ENCODE measurements at regions of chr15 and their contacts with region 1.

Region 1: GRCh38 chr15:73950831-73951561 is 24.7 kb downstream of the LOXL1 start:
- DNase-seq: peak; percentile 53 to 87 (median 78)
- ATAC-seq: peak; percentile 98
- H3K4me3 ChIP-seq: no peak overlapping the region
- H3K4me3 Mint-ChIP-seq: no peak overlapping the region
- H3K27ac ChIP-seq: no peak overlapping the region
- H3K27ac Mint-ChIP-seq: peak overlapping the region; percentile 89
- H3K4me1 ChIP-seq: peaks cover 3% of the 10 kb centered on the region
- H3K4me1 Mint-ChIP-seq: peaks cover 4% of the 10 kb centered on the region
- H3K27me3 ChIP-seq: no peaks in the 10 kb centered on the region
- H3K27me3 Mint-ChIP-seq: no peaks in the 10 kb centered on the region
- CTCF ChIP-seq: peak; percentile 89

Region 2: DNA sequence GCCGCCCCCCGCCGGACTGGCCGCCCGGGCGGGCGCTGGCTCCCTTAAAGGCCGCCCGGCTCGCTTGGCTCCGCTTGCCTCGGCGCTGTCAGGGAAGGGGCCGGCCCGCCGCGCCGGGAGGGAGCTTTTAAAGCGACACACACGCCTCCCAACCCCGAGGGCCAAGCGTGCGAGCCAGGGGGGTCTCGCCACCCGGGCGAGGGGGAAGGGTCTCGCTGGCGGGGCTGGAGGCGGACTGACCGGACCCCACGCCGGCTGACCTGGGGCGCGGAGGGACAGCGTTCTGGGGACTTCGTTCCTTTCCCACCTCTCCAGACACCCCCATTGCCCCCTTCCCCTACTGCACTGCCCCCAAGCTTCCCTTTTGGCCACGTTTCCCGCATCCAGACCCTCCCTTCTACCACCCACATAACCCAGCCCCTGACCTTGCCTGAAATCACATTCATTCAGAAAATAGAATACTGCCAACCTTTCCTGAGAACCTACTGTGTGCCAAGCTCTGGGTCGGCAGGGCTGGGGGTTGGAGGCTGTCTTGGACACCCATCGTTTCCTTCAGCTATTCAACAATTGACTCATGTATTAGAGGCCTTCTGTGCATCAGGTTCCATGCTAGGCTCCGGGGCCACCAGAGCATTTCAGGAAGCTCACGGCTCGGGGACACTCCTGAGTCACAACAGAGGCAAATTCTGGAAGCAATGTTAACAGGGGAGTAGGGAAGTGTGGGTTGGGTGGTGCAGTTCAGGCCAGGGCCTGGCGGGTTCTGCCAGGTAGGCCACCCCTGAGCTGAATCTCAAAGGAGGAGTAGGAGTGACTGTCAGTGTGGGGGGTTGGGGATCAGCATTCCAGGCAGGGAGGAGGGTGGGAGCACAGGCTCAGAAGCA is 197.5 kb before region 1 on chr15 and contains the start of gene INSYN1:
- CTCF ChIA-PET with region 1: no interaction called
- POLR2A ChIA-PET with region 1: no interaction called
- intact Hi-C with region 1: no loop called
- DNase-seq: no peak
- ATAC-seq: no peak
- H3K4me3 ChIP-seq: no peak within 1 kb of the TSS
- H3K4me3 Mint-ChIP-seq: no peak within 1 kb of the TSS
- H3K27ac ChIP-seq: no peak within 1 kb of the TSS
- H3K27ac Mint-ChIP-seq: no peak within 1 kb of the TSS
- H3K4me1 ChIP-seq: no peaks in the 10 kb centered on the region
- H3K4me1 Mint-ChIP-seq: no peaks in the 10 kb centered on the region
- H3K27me3 ChIP-seq: peaks cover 5 to 6% of the 10 kb centered on the region in 2 experiments
- H3K27me3 Mint-ChIP-seq: peaks cover 58% of the 10 kb centered on the region
- CTCF ChIP-seq: no peak
- total RNA-seq, gene INSYN1: not detected

Region 3: GRCh38 chr15:73927476-73928240 is 23.3 kb before region 1 on chr15:
- CTCF ChIA-PET with region 1: interaction called, 11 read pairs
- POLR2A ChIA-PET with region 1: no interaction called
- intact Hi-C with region 1: no loop called
- DNase-seq: peak; percentile 56 to 87 (median 77)
- ATAC-seq: peak; percentile 88
- H3K4me3 ChIP-seq: peak overlapping the region; percentile 49 to 79
- H3K4me3 Mint-ChIP-seq: peak overlapping the region; percentile 79
- H3K27ac ChIP-seq: peak overlapping the region in 1 of 2 experiments; percentile 41
- H3K27ac Mint-ChIP-seq: peak overlapping the region; percentile 20
- H3K4me1 ChIP-seq: peaks cover 27% of the 10 kb centered on the region
- H3K4me1 Mint-ChIP-seq: peaks cover 38% of the 10 kb centered on the region
- H3K27me3 ChIP-seq: no peaks in the 10 kb centered on the region
- H3K27me3 Mint-ChIP-seq: no peaks in the 10 kb centered on the region
- CTCF ChIP-seq: peak; percentile 83

Region 4: GRCh38 chr15:73964736-73965093 is 13.7 kb after region 1 on chr15:
- CTCF ChIA-PET with region 1: interaction called, 328 read pairs
- POLR2A ChIA-PET with region 1: interaction called, 6 read pairs
- intact Hi-C with region 1: loop called (anchors 1 kb)
- DNase-seq: peak; percentile 74 to 94 (median 88)
- ATAC-seq: peak; percentile 89
- H3K4me3 ChIP-seq: peak overlapping the region; percentile 46 to 51
- H3K4me3 Mint-ChIP-seq: peak overlapping the region; percentile 83
- H3K27ac ChIP-seq: no peak overlapping the region
- H3K27ac Mint-ChIP-seq: peak overlapping the region; percentile 39
- H3K4me1 ChIP-seq: peaks cover 26% of the 10 kb centered on the region
- H3K4me1 Mint-ChIP-seq: peaks cover 34% of the 10 kb centered on the region
- H3K27me3 ChIP-seq: no peaks in the 10 kb centered on the region
- H3K27me3 Mint-ChIP-seq: no peaks in the 10 kb centered on the region
- CTCF ChIP-seq: peak; percentile 95

Region 5: GRCh38 chr15:74044267-74045110 is 93.5 kb after region 1 on chr15:
- CTCF ChIA-PET with region 1: interaction called, 14 read pairs
- POLR2A ChIA-PET with region 1: no interaction called
- intact Hi-C with region 1: no loop called
- DNase-seq: no peak
- ATAC-seq: no peak
- H3K4me3 ChIP-seq: no peak overlapping the region
- H3K4me3 Mint-ChIP-seq: no peak overlapping the region
- H3K27ac ChIP-seq: no peak overlapping the region
- H3K27ac Mint-ChIP-seq: no peak overlapping the region
- H3K4me1 ChIP-seq: peaks cover 10% of the 10 kb centered on the region
- H3K4me1 Mint-ChIP-seq: peaks cover 10% of the 10 kb centered on the region
- H3K27me3 ChIP-seq: no peaks in the 10 kb centered on the region
- H3K27me3 Mint-ChIP-seq: no peaks in the 10 kb centered on the region
- CTCF ChIP-seq: no peak

Region 6: DNA sequence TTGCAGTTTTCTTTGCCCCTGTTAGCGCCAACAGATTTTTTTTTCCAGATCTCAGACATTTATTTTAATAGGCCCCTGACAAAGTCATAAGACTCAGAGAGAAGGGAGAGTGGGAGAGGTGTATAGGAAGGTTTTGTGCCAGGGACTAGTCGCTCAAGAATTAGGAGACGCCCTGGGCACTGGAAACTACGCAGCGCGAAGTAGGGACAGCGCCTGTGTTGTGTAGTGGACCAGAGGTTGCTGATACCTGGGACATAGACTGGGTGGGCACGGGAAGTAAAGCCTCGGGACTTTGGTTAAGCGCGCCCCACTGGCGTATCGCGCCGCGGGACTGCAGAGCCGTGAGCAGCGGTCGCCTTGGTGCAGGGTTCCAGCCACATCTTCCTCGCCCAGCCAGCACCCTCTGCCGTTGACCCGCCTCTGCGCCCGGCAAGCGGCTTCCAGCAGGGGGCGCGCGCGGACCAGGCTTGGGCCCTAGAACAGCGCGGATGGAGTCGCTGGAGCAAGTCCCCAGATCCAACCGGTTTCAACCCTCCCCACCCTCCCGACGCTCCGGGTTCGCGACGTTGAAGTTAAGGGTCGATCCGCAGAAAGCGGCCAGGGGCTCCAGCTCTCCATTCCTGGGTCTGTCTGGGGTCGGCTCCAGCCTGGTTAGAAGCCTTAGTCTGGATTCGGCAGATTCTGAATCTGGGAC is 176.4 kb after region 1 on chr15:
- CTCF ChIA-PET with region 1: no interaction called
- POLR2A ChIA-PET with region 1: no interaction called
- intact Hi-C with region 1: loop called in 1 of 2 experiments (anchors 5 kb)
- DNase-seq: peak; percentile 72 to 94 (median 82)
- ATAC-seq: peak; percentile 90
- H3K4me3 ChIP-seq: no peak overlapping the region
- H3K4me3 Mint-ChIP-seq: no peak overlapping the region
- H3K27ac ChIP-seq: no peak overlapping the region
- H3K27ac Mint-ChIP-seq: no peak overlapping the region
- H3K4me1 ChIP-seq: peaks cover 25% of the 10 kb centered on the region
- H3K4me1 Mint-ChIP-seq: peaks cover 26% of the 10 kb centered on the region
- H3K27me3 ChIP-seq: peaks cover 27 to 39% of the 10 kb centered on the region in 2 experiments
- H3K27me3 Mint-ChIP-seq: peaks cover 61% of the 10 kb centered on the region
- CTCF ChIP-seq: peak; percentile 87

Region 7: GRCh38 chr15:74302821-74303359 is 351.9 kb after region 1 on chr15:
- CTCF ChIA-PET with region 1: no interaction called
- POLR2A ChIA-PET with region 1: no interaction called
- intact Hi-C with region 1: loop called in 1 of 2 experiments (anchors 5 kb)
- DNase-seq: peak in 6 of 9 experiments; percentile 26 to 44 (median 34)
- ATAC-seq: no peak
- H3K4me3 ChIP-seq: no peak overlapping the region
- H3K4me3 Mint-ChIP-seq: no peak overlapping the region
- H3K27ac ChIP-seq: no peak overlapping the region
- H3K27ac Mint-ChIP-seq: no peak overlapping the region
- H3K4me1 ChIP-seq: no peaks in the 10 kb centered on the region
- H3K4me1 Mint-ChIP-seq: no peaks in the 10 kb centered on the region
- H3K27me3 ChIP-seq: no peaks in the 10 kb centered on the region
- H3K27me3 Mint-ChIP-seq: peaks cover 59% of the 10 kb centered on the region
- CTCF ChIP-seq: peak; percentile 42

Region 8: GRCh38 chr15:74322181-74323076 is 371.4 kb after region 1 on chr15:
- CTCF ChIA-PET with region 1: interaction called, 3 read pairs
- POLR2A ChIA-PET with region 1: no interaction called
- intact Hi-C with region 1: loop called (anchors 1 kb)
- DNase-seq: peak; percentile 42 to 79 (median 57)
- ATAC-seq: peak; percentile 82
- H3K4me3 ChIP-seq: no peak overlapping the region
- H3K4me3 Mint-ChIP-seq: no peak overlapping the region
- H3K27ac ChIP-seq: no peak overlapping the region
- H3K27ac Mint-ChIP-seq: no peak overlapping the region
- H3K4me1 ChIP-seq: peaks cover 34% of the 10 kb centered on the region
- H3K4me1 Mint-ChIP-seq: peaks cover 22% of the 10 kb centered on the region
- H3K27me3 ChIP-seq: no peaks in the 10 kb centered on the region
- H3K27me3 Mint-ChIP-seq: peaks cover 4% of the 10 kb centered on the region
- CTCF ChIP-seq: peak; percentile 69

Measured in CD8-positive, alpha-beta T cell (primary cell).